Vagina (tissue), 2 donors: ENCODE measurements at regions of chr13 and their contacts with region 1.

Region 1: GRCh38 chr13:72781451-72782439 is at the starts of genes DIS3 and PIBF1:
- DNase-seq: peak; percentile 97 to 98
- H3K4me3 ChIP-seq: peak within 1 kb of the TSS; percentile 72 to 100
- H3K27ac ChIP-seq: peak within 1 kb of the TSS; percentile 84
- H3K4me1 ChIP-seq: peaks cover 50% of the 10 kb centered on the region
- H3K27me3 ChIP-seq: no peaks in the 10 kb centered on the region
- CTCF ChIP-seq: no peak
- POLR2A ChIP-seq: peak in 1 of 2 donors; percentile 30
- total RNA-seq, gene DIS3: 19.4 TPM
- total RNA-seq, gene PIBF1: 16.9 TPM

Region 2: GRCh38 chr13:72727417-72728289 is 54.1 kb before region 1 on chr13 and contains the starts of genes BORA and MZT1:
- intact Hi-C with region 1: loop called (anchors 10 kb)
- DNase-seq: peak in 1 of 2 donors; percentile 95
- H3K4me3 ChIP-seq: peak within 1 kb of the TSS; percentile 73 to 95
- H3K27ac ChIP-seq: peak within 1 kb of the TSS; percentile 50
- H3K4me1 ChIP-seq: peaks cover 21% of the 10 kb centered on the region
- H3K27me3 ChIP-seq: no peaks in the 10 kb centered on the region
- CTCF ChIP-seq: no peak
- POLR2A ChIP-seq: no peak
- total RNA-seq, gene BORA: 1.7 TPM
- total RNA-seq, gene MZT1: 3.2 TPM